ENCODE measurements at regions of chr20 and their contacts with region 1.

Region 1: GRCh38 chr20:7935027-7935551 is 5.2 kb downstream of the HAO1 start:
- DNase-seq: no peak
- H3K4me3 ChIP-seq: no peak overlapping the region
- H3K27ac ChIP-seq: no peak overlapping the region
- H3K4me1 ChIP-seq: no peaks in the 10 kb centered on the region
- H3K27me3 ChIP-seq: peaks cover 24% of the 10 kb centered on the region
- CTCF ChIP-seq: no peak

Region 2: GRCh38 chr20:7916648-7917047 is 18.4 kb before region 1 on chr20:
- CTCF ChIA-PET with region 1: no interaction called
- POLR2A ChIA-PET with region 1: interaction called, 14 read pairs
- intact Hi-C with region 1: no loop called
- DNase-seq: no peak
- H3K4me3 ChIP-seq: no peak overlapping the region
- H3K27ac ChIP-seq: no peak overlapping the region
- H3K4me1 ChIP-seq: no peaks in the 10 kb centered on the region
- H3K27me3 ChIP-seq: peaks cover 31% of the 10 kb centered on the region
- CTCF ChIP-seq: no peak

Region 3: DNA sequence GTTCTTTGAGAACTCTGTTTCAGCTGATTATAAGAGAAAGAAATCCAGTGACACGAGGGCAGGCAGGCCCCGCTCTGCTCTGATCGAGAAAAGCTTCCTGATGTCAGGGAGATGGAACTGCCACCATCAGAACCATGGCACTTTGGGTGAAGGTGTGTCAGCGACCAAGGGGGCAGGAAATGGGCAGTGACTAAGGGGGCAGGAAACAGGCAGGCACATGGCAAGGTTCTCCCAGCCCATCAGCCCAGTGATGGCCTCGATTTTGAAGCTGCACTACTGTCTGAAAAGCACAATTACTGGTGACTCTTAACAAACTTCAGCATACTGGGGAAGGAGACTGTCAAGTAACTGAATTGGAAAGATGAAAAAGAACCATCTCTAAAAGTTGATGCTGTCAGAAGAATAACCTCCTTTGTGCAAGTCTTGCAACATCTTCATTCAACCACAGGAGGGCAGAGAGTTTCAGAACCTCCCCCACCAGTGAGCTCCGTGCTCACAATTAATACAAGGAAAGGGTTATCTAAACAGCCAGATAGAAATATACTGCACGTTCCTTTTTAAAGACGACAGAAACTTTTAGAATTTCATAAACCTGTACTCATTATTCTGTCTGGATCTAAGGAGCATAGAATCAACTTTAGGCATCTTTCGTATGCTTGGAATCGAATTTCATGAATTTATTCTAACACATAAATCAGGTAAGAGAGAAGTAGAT is 45.4 kb after region 1 on chr20:
- CTCF ChIA-PET with region 1: interaction called, 12 read pairs
- POLR2A ChIA-PET with region 1: no interaction called
- intact Hi-C with region 1: no loop called
- DNase-seq: peak; percentile 58
- H3K4me3 ChIP-seq: no peak overlapping the region
- H3K27ac ChIP-seq: no peak overlapping the region
- H3K4me1 ChIP-seq: no peaks in the 10 kb centered on the region
- H3K27me3 ChIP-seq: no peaks in the 10 kb centered on the region
- CTCF ChIP-seq: peak; percentile 57

Region 4: GRCh38 chr20:8095648-8096572 is 160.8 kb after region 1 on chr20:
- CTCF ChIA-PET with region 1: no interaction called
- POLR2A ChIA-PET with region 1: no interaction called
- intact Hi-C with region 1: no loop called
- DNase-seq: no peak
- H3K4me3 ChIP-seq: no peak overlapping the region
- H3K27ac ChIP-seq: no peak overlapping the region
- H3K4me1 ChIP-seq: peaks cover 11% of the 10 kb centered on the region
- H3K27me3 ChIP-seq: no peaks in the 10 kb centered on the region
- CTCF ChIP-seq: no peak